Heart left ventricle (tissue), 16 donors: ENCODE measurements at regions of chr5 and their contacts with region 1.

Region 1: DNA sequence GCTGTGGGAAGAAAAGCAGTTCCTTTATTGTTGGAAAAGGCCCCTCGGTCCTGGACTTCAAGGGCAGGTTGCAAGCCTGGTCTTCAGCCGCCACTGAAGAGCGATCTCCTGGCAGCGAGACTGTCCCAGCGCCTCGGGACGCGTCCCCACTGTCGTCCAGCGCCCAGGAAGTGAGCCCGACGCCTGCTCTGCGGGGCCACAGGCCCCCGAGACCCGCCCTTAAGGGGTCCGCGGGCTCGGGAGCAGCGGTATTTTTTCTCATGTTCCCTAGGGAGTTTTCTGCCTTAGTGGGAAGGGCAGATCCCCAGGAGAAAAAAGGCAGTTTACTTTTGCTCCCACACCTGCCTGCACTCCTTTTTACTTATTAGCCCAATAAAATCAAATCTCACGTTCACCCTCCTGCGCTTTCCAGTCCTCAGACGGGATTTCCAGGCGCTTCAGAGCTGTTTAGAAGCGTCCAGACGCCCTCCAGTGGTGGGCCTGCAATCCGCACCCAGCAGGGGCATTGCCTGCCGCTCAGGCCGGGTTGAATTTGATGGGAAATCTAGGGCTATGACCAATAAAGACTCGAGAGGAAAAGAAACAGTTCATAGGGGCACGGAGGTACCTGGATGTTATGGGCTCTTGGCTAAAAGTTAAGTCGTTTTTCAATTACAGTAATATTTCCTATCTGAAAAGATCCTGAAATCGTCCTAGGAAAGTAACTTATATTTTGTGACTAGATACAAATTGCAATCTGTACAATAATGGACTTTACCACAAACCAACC is 2.8 kb upstream of the EFNA5 start:
- DNase-seq: peak; percentile 79 to 89 (median 85)
- ATAC-seq: peak; percentile 49 to 62 (median 56)
- H3K4me3 ChIP-seq: peak overlapping the region; percentile 48 to 79 (median 64)
- H3K27ac ChIP-seq: peak overlapping the region; percentile 24 to 93 (median 87)
- H3K4me1 ChIP-seq: peaks cover 0 to 41% (median 10%) of the 10 kb centered on the region in 12 donors
- H3K27me3 ChIP-seq: peaks cover 0 to 77% (median 19%) of the 10 kb centered on the region in 9 donors
- CTCF ChIP-seq: peak; percentile 77 to 98 (median 92)
- POLR2A ChIP-seq: no peak

Region 2: DNA sequence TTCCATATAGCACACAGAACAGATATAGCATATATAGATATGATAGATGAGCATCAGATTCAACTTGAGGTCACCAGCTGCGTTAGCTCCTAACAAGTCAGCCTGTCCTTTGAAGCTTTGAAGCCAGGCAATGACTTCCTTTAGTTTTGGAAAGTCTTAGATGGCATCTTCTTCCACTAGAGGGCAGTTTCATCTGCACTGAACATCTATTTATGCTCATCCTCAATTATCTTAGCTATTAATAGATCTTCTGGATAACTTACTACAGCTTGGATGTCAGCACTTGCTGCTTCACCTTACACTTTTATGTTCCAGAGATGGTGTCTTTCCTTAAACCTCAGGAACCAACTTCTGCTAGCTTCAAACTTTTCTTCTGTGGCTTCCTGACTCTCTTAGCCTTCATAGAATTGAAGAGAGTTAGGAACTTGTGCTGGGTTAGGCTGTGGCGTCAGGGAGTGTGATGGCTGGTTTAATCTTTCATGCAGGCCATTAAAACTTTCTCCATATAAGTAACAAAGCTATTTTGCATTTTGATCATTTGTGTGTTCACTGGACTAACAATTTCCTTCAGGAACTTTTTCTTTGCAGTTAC is 1404.2 kb before region 1 on chr5:
- intact Hi-C with region 1: loop called in 1 of 10 experiments (anchors 10 kb)
- DNase-seq: no peak
- ATAC-seq: no peak
- H3K4me3 ChIP-seq: no peak overlapping the region
- H3K27ac ChIP-seq: no peak overlapping the region
- H3K4me1 ChIP-seq: no peaks in the 10 kb centered on the region
- H3K27me3 ChIP-seq: no peaks in the 10 kb centered on the region
- CTCF ChIP-seq: peak in 10 of 12 donors; percentile 16 to 51 (median 28)
- POLR2A ChIP-seq: no peak

Region 3: DNA sequence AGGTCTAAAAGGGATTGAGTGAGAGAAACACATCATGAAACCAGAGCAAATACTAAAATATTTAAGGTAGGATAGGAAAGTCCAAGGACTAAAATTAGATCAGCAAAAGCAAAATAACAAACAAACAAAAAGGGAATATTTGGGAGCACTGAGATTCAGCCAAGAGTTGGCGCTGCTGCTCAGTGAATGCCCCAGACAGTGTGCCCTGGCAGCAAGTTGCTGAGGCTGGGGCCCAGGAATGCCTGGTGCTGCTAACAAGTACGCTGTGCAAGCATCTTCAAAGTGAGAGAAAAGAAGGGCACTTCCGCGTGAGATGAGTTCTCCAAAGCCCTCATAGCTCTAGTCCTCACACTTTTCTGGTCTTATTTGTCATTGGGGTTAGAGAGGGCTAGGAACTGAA is 606.2 kb before region 1 on chr5:
- intact Hi-C with region 1: loop called in 2 of 10 experiments (anchors 10 kb)
- DNase-seq: peak in 4 of 5 donors; percentile 8 to 38 (median 25)
- ATAC-seq: peak; percentile 52 to 83 (median 67)
- H3K4me3 ChIP-seq: no peak overlapping the region
- H3K27ac ChIP-seq: peak overlapping the region in 1 of 12 donors; percentile 17
- H3K4me1 ChIP-seq: no peaks in the 10 kb centered on the region
- H3K27me3 ChIP-seq: no peaks in the 10 kb centered on the region
- CTCF ChIP-seq: peak in 8 of 12 donors; percentile 9 to 36 (median 22)
- POLR2A ChIP-seq: no peak

Region 4: DNA sequence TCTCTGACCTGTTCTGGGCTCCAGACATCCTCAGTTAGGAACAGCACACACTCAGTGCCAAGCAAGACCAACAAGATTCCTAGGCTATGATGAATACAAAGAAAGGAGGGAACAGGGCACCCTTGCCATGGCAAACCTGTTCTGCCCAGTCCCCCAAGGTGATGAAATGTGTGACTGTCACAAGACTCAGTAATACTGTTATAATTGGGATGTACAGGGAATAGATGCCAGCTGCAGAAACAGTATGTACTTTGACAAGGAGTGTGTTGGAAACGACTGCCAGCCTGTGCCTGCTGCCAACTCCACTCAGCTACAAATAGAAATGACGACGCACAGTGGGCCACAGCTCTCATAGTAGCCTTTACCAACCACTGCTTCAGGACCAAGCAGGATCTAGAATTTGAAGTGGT is 455.8 kb before region 1 on chr5:
- intact Hi-C with region 1: loop called in 5 of 10 experiments (anchors 2 to 10 kb)
- DNase-seq: peak; percentile 62 to 90 (median 80)
- ATAC-seq: peak; percentile 94 to 97 (median 96)
- H3K4me3 ChIP-seq: no peak overlapping the region
- H3K27ac ChIP-seq: peak overlapping the region; percentile 41 to 93 (median 82)
- H3K4me1 ChIP-seq: peaks cover 0 to 31% (median 4%) of the 10 kb centered on the region in 12 donors
- H3K27me3 ChIP-seq: no peaks in the 10 kb centered on the region
- CTCF ChIP-seq: no peak
- POLR2A ChIP-seq: no peak

Region 5: GRCh38 chr5:107402434-107403227 is 270.9 kb before region 1 on chr5:
- intact Hi-C with region 1: loop called in 1 of 10 experiments (anchors 10 kb)
- DNase-seq: peak in 2 of 5 donors; percentile 14 to 49
- ATAC-seq: peak; percentile 70 to 84 (median 82)
- H3K4me3 ChIP-seq: no peak overlapping the region
- H3K27ac ChIP-seq: peak overlapping the region in 7 of 12 donors; percentile 12 to 52 (median 28)
- H3K4me1 ChIP-seq: peaks cover 0 to 22% (median 6%) of the 10 kb centered on the region in 12 donors
- H3K27me3 ChIP-seq: no peaks in the 10 kb centered on the region
- CTCF ChIP-seq: no peak
- POLR2A ChIP-seq: no peak

Region 6: GRCh38 chr5:107604832-107605389 is 68.6 kb before region 1 on chr5:
- intact Hi-C with region 1: loop called in 1 of 10 experiments (anchors 5 kb)
- DNase-seq: no peak
- ATAC-seq: peak in 3 of 4 donors; percentile 4 to 22 (median 6)
- H3K4me3 ChIP-seq: peak overlapping the region in 2 of 12 donors; percentile 7 to 19
- H3K27ac ChIP-seq: peak overlapping the region in 2 of 12 donors; percentile 24 to 28
- H3K4me1 ChIP-seq: peaks cover 0 to 60% (median 7%) of the 10 kb centered on the region in 12 donors
- H3K27me3 ChIP-seq: no peaks in the 10 kb centered on the region
- CTCF ChIP-seq: no peak
- POLR2A ChIP-seq: no peak